ENCODE measurements at regions of chr17 and their contacts with region 1.

Region 1: GRCh38 chr17:4796553-4796921 is 573 bp downstream of the PSMB6 start:
- DNase-seq: no peak
- H3K4me3 ChIP-seq: peak overlapping the region; percentile 62 to 90
- H3K4me3 Mint-ChIP-seq: peak overlapping the region; percentile 99 to 100 (median 100)
- H3K27ac ChIP-seq: peak overlapping the region; percentile 83
- H3K27ac Mint-ChIP-seq: peak overlapping the region; percentile 90 to 99 (median 98)
- H3K4me1 ChIP-seq: peaks cover 10% of the 10 kb centered on the region
- H3K4me1 Mint-ChIP-seq: peaks cover 11 to 16% (median 11%) of the 10 kb centered on the region in 4 donors
- H3K27me3 ChIP-seq: no peaks in the 10 kb centered on the region
- H3K27me3 Mint-ChIP-seq: no peaks in the 10 kb centered on the region

Region 2: GRCh38 chr17:4625181-4625617 is 171.3 kb before region 1 on chr17:
- CTCF ChIA-PET with region 1: no interaction called
- POLR2A ChIA-PET with region 1: no interaction called
- intact Hi-C with region 1: no loop called
- DNase-seq: no peak
- H3K4me3 ChIP-seq: no peak overlapping the region
- H3K4me3 Mint-ChIP-seq: no peak overlapping the region
- H3K27ac ChIP-seq: no peak overlapping the region
- H3K27ac Mint-ChIP-seq: no peak overlapping the region
- H3K4me1 ChIP-seq: no peaks in the 10 kb centered on the region
- H3K4me1 Mint-ChIP-seq: no peaks in the 10 kb centered on the region
- H3K27me3 ChIP-seq: no peaks in the 10 kb centered on the region
- H3K27me3 Mint-ChIP-seq: peaks cover 3 to 8% of the 10 kb centered on the region in 2 donors

Region 3: GRCh38 chr17:4806777-4807604 is 10.5 kb after region 1 on chr17 and contains the start of gene PLD2:
- CTCF ChIA-PET with region 1: no interaction called
- POLR2A ChIA-PET with region 1: interaction called, 26 read pairs
- intact Hi-C with region 1: loop called (anchors 1 kb)
- DNase-seq: peak; percentile 84 to 87 (median 85)
- H3K4me3 ChIP-seq: peak within 1 kb of the TSS; percentile 47 to 54
- H3K4me3 Mint-ChIP-seq: peak within 1 kb of the TSS; percentile 69 to 85 (median 82)
- H3K27ac ChIP-seq: peak within 1 kb of the TSS; percentile 67
- H3K27ac Mint-ChIP-seq: peak within 1 kb of the TSS; percentile 23 to 83 (median 60)
- H3K4me1 ChIP-seq: peaks cover 15% of the 10 kb centered on the region
- H3K4me1 Mint-ChIP-seq: peaks cover 3 to 23% (median 10%) of the 10 kb centered on the region in 4 donors
- H3K27me3 ChIP-seq: no peaks in the 10 kb centered on the region
- H3K27me3 Mint-ChIP-seq: no peaks in the 10 kb centered on the region
- total RNA-seq, gene PLD2: 30.8 to 37.5 TPM

Region 4: GRCh38 chr17:4845118-4845517 is 48.6 kb after region 1 on chr17:
- CTCF ChIA-PET with region 1: no interaction called
- POLR2A ChIA-PET with region 1: no interaction called
- intact Hi-C with region 1: no loop called
- DNase-seq: no peak
- H3K4me3 ChIP-seq: no peak overlapping the region
- H3K4me3 Mint-ChIP-seq: no peak overlapping the region
- H3K27ac ChIP-seq: no peak overlapping the region
- H3K27ac Mint-ChIP-seq: peak overlapping the region in 2 of 7 donors; percentile 25 to 77
- H3K4me1 ChIP-seq: peaks cover 24% of the 10 kb centered on the region
- H3K4me1 Mint-ChIP-seq: peaks cover 46 to 77% (median 54%) of the 10 kb centered on the region in 4 donors
- H3K27me3 ChIP-seq: no peaks in the 10 kb centered on the region
- H3K27me3 Mint-ChIP-seq: no peaks in the 10 kb centered on the region